HCT116 (cell line): ENCODE measurements at regions of chr6 and their contacts with region 1.

Region 1: GRCh38 chr6:99151634-99152344 is 197.7 kb downstream of the FAXC start:
- DNase-seq: peak; percentile 37
- ATAC-seq: peak; percentile 99
- H3K4me3 ChIP-seq: no peak overlapping the region
- H3K27ac ChIP-seq: no peak overlapping the region
- H3K4me1 ChIP-seq: no peaks in the 10 kb centered on the region
- H3K27me3 ChIP-seq: no peaks in the 10 kb centered on the region
- CTCF ChIP-seq: peak; percentile 53 to 91 (median 81); a peak in 5 of 6 replicates
- POLR2A ChIP-seq: no peak
- RAD21 ChIP-seq: peak; percentile 61

Region 2: GRCh38 chr6:98747960-98748359 is 403.8 kb before region 1 on chr6:
- CTCF ChIA-PET with region 1: no interaction called
- POLR2A ChIA-PET with region 1: no interaction called
- RAD21 ChIA-PET with region 1: no interaction called
- intact Hi-C with region 1: no loop called
- DNase-seq: no peak
- ATAC-seq: no peak
- H3K4me3 ChIP-seq: no peak overlapping the region
- H3K27ac ChIP-seq: no peak overlapping the region
- H3K4me1 ChIP-seq: no peaks in the 10 kb centered on the region
- H3K27me3 ChIP-seq: peaks cover 22% of the 10 kb centered on the region; the same call in 1 of the 2 replicates
- CTCF ChIP-seq: no peak
- POLR2A ChIP-seq: no peak
- RAD21 ChIP-seq: no peak

Region 3: GRCh38 chr6:99092009-99092408 is 59.8 kb before region 1 on chr6:
- CTCF ChIA-PET with region 1: no interaction called
- POLR2A ChIA-PET with region 1: no interaction called
- RAD21 ChIA-PET with region 1: no interaction called
- intact Hi-C with region 1: no loop called
- DNase-seq: no peak
- ATAC-seq: no peak
- H3K4me3 ChIP-seq: no peak overlapping the region
- H3K27ac ChIP-seq: no peak overlapping the region
- H3K4me1 ChIP-seq: no peaks in the 10 kb centered on the region
- H3K27me3 ChIP-seq: peaks cover 75% of the 10 kb centered on the region
- CTCF ChIP-seq: no peak
- POLR2A ChIP-seq: no peak
- RAD21 ChIP-seq: no peak

Region 4: GRCh38 chr6:99219788-99220187 is 68.0 kb after region 1 on chr6:
- CTCF ChIA-PET with region 1: interaction called, 5 read pairs
- POLR2A ChIA-PET with region 1: no interaction called
- RAD21 ChIA-PET with region 1: no interaction called
- intact Hi-C with region 1: loop called (anchors 2 kb)
- DNase-seq: peak; percentile 24
- ATAC-seq: peak; percentile 99
- H3K4me3 ChIP-seq: no peak overlapping the region
- H3K27ac ChIP-seq: no peak overlapping the region
- H3K4me1 ChIP-seq: 0 out of 4 replicates have a peak, but pooled peaks cover 0 to 5% of the 10 kb centered on the region in 2 experiments
- H3K27me3 ChIP-seq: no peaks in the 10 kb centered on the region
- CTCF ChIP-seq: peak; percentile 37 to 57 (median 56); a peak in 5 of 6 replicates
- POLR2A ChIP-seq: no peak
- RAD21 ChIP-seq: peak; percentile 59

Region 5: GRCh38 chr6:99241905-99242534 is 90.2 kb after region 1 on chr6:
- CTCF ChIA-PET with region 1: interaction called, 38 read pairs
- POLR2A ChIA-PET with region 1: no interaction called
- RAD21 ChIA-PET with region 1: no interaction called
- intact Hi-C with region 1: loop called (anchors 1 kb)
- DNase-seq: peak; percentile 38
- ATAC-seq: peak; percentile 86
- H3K4me3 ChIP-seq: no peak overlapping the region
- H3K27ac ChIP-seq: no peak overlapping the region
- H3K4me1 ChIP-seq: no peaks in the 10 kb centered on the region
- H3K27me3 ChIP-seq: peaks cover 58% of the 10 kb centered on the region
- CTCF ChIP-seq: peak; percentile 34 to 63 (median 42); a peak in 4 of 6 replicates
- POLR2A ChIP-seq: no peak
- RAD21 ChIP-seq: peak; percentile 74